Activated CD4-positive, alpha-beta T cell treated with anti-CD3 and anti-CD28 coated beads for 36 hours (primary cell): ENCODE measurements at regions of chr17 and their contacts with region 1.

Region 1: DNA sequence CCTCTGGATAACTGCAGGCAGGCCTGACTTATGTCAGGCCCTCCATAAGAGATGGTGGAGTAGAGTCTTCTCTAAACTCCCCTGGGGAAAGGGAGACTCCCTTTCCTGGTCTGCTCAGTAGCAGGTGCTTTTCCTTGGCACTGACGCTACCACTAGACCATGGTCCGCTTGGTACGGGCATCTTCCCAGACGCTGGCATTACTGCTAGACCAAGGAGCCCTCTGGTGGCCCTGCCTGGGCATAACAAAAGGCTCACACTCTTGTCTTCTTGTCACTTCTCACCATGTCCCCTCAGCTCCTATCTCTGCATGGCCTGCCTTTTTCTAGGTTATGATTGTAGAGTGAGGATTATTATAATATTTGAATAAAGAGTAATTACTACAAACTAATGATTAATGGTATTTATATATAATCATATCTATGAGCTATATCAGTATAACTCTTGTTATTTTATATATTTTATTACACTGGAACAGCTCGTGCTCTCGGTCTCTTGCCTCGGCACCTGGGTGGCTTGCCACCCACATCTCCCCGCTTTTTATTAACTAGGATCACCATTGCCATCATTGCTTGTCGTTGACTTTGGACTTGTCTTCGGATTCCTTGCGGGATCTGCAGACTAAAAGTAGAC is 59.8 kb upstream of the ARL4D start:
- DNase-seq: peak; percentile 81
- ATAC-seq: no peak
- H3K4me3 Mint-ChIP-seq: no peak overlapping the region
- H3K27ac Mint-ChIP-seq: no peak overlapping the region
- H3K4me1 Mint-ChIP-seq: peaks cover 38% of the 10 kb centered on the region
- H3K27me3 Mint-ChIP-seq: no peaks in the 10 kb centered on the region

Region 2: DNA sequence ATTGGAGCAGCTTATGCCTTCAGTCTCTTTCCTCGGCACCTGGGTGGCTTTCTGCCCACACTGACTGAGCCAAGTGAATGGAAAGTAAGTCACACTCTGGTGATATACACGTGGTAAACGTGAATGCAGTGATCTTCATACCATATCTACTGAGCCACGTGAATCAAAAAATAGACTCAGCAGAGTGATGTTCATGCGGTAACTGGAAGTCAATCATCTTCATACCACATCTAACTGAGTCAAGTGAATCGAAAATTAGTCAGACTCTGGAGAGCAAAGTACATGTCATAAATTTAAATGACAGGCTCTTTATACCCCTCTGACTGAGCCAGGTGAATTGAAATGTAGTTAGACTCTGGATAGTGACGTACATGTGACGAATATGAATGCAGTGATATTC is 12.7 kb after region 1 on chr17:
- CTCF ChIA-PET with region 1: interaction called, 8 read pairs
- POLR2A ChIA-PET with region 1: interaction called, 14 read pairs
- intact Hi-C with region 1: loop called in 1 of 2 experiments (anchors 1 kb)
- DNase-seq: peak; percentile 25
- ATAC-seq: peak; percentile 81
- H3K4me3 Mint-ChIP-seq: no peak overlapping the region
- H3K27ac Mint-ChIP-seq: no peak overlapping the region
- H3K4me1 Mint-ChIP-seq: peaks cover 7% of the 10 kb centered on the region
- H3K27me3 Mint-ChIP-seq: no peaks in the 10 kb centered on the region

Region 3: GRCh38 chr17:43367737-43368242 is 28.8 kb after region 1 on chr17:
- CTCF ChIA-PET with region 1: interaction called, 5 read pairs
- POLR2A ChIA-PET with region 1: interaction called, 143 read pairs
- intact Hi-C with region 1: loop called (anchors 1 kb)
- DNase-seq: peak; percentile 62
- ATAC-seq: peak; percentile 53
- H3K4me3 Mint-ChIP-seq: peak overlapping the region; percentile 85
- H3K27ac Mint-ChIP-seq: peak overlapping the region; percentile 100
- H3K4me1 Mint-ChIP-seq: peaks cover 57% of the 10 kb centered on the region
- H3K27me3 Mint-ChIP-seq: no peaks in the 10 kb centered on the region

Region 4: GRCh38 chr17:43393944-43394482 is 55.0 kb after region 1 on chr17:
- CTCF ChIA-PET with region 1: interaction called, 10 read pairs
- POLR2A ChIA-PET with region 1: interaction called, 4 read pairs
- intact Hi-C with region 1: loop called in 1 of 2 experiments (anchors 1 kb)
- DNase-seq: peak; percentile 93
- ATAC-seq: peak; percentile 55
- H3K4me3 Mint-ChIP-seq: no peak overlapping the region
- H3K27ac Mint-ChIP-seq: peak overlapping the region; percentile 31
- H3K4me1 Mint-ChIP-seq: peaks cover 20% of the 10 kb centered on the region
- H3K27me3 Mint-ChIP-seq: no peaks in the 10 kb centered on the region